Mammary epithelial cell (primary cell): ENCODE measurements at regions of chr3 and their contacts with region 1.

Region 1: DNA sequence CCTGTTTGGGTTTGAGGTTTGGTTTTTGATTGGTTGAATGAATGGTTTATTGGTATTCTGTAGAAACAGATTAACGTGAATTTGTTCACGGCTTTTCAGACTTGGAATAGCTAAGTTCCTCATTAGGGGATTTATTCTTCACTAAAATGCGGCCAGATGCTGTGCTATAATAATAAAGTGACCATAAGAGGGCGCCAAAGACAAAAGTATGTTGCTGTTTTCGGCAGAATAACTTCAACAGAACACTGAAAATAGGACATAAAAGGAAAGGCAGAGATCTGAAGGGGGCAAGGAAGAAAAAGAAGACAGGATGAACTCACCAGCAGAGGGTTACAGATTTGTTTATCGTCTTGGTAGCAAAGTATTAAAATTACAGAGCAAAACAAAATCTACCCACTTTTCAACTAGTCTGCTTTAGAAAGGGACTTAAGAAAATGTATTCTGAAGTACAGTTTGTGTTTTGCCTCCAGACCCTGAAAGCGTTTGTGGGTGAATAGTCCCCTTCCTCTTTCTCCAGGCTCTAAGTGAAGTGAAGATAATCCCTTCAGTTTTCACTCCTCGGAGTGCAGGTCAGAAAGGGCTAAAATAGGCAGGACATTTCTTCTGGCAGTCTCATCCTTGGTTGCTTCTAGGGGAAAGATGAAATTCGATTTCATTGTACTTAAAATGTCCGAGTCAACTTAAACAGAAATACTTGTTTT is 147.6 kb downstream of the IL20RB start:
- DNase-seq: peak; percentile 35
- H3K4me3 ChIP-seq: no peak overlapping the region
- H3K27ac ChIP-seq: no peak overlapping the region
- H3K4me1 ChIP-seq: no peaks in the 10 kb centered on the region
- H3K27me3 ChIP-seq: no peaks in the 10 kb centered on the region
- CTCF ChIP-seq: peak; percentile 54 to 59

Region 2: DNA sequence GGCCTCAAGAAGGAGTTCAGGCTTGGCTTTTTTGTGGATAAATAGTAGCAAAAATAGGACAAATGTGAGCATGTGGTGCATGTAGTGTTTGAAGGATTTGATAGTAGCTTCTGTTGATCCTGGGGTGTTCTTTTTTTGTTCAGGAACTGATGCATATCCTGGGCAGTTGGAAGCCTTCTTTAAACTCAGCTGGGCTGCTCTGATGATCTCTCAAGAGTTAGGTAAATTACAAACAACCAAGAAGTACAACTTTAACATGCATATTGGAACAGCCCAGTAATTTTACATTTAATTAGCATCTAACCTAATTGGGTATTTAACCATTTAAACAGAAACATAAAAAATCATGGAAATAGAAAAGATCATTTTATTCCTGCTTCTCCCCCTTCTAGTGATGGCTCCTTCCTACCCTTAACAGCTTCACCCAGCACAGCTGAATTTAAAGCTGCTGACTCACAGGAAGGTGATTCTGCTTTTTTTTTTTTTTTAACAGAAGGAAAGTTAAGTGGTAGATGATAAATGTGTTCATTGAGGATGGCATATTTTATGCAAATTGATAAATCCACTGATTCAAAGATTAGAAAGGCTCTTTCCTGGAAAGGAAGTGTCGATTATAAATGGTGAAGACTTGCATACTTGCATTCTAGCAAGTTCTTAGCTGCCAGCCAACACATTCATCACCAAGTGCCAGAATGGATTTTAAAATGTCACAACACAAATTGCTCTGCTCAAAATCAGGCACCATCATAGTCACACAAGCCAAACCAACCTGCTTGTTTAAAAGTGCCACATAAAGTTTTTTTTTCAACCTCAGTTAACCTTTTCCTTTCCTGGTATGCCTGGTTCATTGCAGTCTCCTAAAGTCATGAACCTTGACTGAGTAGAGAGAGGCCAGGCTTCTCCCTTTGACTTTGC is 266.5 kb before region 1 on chr3:
- CTCF ChIA-PET with region 1: no interaction called
- dilution Hi-C with region 1: no loop called
- in situ Hi-C with region 1: no loop called
- intact Hi-C with region 1: no loop called
- DNase-seq: peak; percentile 40
- H3K4me3 ChIP-seq: no peak overlapping the region
- H3K27ac ChIP-seq: no peak overlapping the region
- H3K4me1 ChIP-seq: peaks cover 13% of the 10 kb centered on the region
- H3K27me3 ChIP-seq: no peaks in the 10 kb centered on the region
- CTCF ChIP-seq: no peak

Region 3: GRCh38 chr3:137687181-137687879 is 581.9 kb after region 1 on chr3:
- CTCF ChIA-PET with region 1: no interaction called
- dilution Hi-C with region 1: loop called (anchors 5 kb)
- in situ Hi-C with region 1: loop called in 1 of 2 experiments (anchors 25 kb)
- intact Hi-C with region 1: loop called (anchors 2 kb)
- DNase-seq: no peak
- H3K4me3 ChIP-seq: no peak overlapping the region
- H3K27ac ChIP-seq: no peak overlapping the region
- H3K4me1 ChIP-seq: no peaks in the 10 kb centered on the region
- H3K27me3 ChIP-seq: no peaks in the 10 kb centered on the region
- CTCF ChIP-seq: no peak

Region 4: DNA sequence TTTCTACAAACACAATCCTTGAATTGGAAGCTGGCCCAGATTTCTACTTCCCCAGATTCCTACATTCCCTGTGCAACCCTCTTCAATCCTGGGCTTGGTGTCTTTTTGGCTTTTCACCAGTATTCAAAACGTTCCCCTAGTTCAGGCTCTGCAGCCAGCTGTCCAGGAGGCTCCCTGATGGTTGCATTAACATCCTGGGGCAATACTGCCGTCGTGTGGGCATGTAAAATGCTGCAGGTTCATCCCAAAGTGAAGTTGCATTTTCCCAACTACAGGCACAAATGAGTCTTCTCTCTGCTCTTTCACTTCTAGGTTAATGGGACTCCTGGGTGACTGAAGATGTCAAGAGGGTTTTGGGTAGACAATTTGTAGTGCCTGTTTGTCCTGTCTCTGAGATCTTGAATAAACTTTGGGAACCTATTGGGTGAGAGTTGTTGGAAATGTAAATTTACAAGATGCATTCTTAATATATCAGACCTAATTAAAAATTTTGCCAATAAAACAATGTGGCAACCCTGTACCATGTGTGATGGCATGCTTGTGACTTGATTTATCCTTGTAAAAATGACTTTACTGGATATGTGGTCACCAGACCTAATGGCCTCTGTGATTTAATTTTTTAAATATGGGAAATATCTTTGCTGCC is 687.3 kb after region 1 on chr3:
- CTCF ChIA-PET with region 1: no interaction called
- dilution Hi-C with region 1: no loop called
- in situ Hi-C with region 1: no loop called
- intact Hi-C with region 1: loop called (anchors 1 kb)
- DNase-seq: peak; percentile 35
- H3K4me3 ChIP-seq: no peak overlapping the region
- H3K27ac ChIP-seq: no peak overlapping the region
- H3K4me1 ChIP-seq: no peaks in the 10 kb centered on the region
- H3K27me3 ChIP-seq: no peaks in the 10 kb centered on the region
- CTCF ChIP-seq: peak; percentile 67 to 78

Region 5: GRCh38 chr3:137970914-137971831 is 865.7 kb after region 1 on chr3:
- CTCF ChIA-PET with region 1: no interaction called
- dilution Hi-C with region 1: no loop called
- in situ Hi-C with region 1: no loop called
- intact Hi-C with region 1: loop called (anchors 1 kb)
- DNase-seq: peak; percentile 50
- H3K4me3 ChIP-seq: peak overlapping the region in 1 of 3 experiments; percentile 14
- H3K27ac ChIP-seq: no peak overlapping the region
- H3K4me1 ChIP-seq: peaks cover 5% of the 10 kb centered on the region
- H3K27me3 ChIP-seq: no peaks in the 10 kb centered on the region
- CTCF ChIP-seq: peak; percentile 86 to 96